GM12878 (cell line): ENCODE measurements at regions of chr10 and their contacts with region 1.

Region 1: DNA sequence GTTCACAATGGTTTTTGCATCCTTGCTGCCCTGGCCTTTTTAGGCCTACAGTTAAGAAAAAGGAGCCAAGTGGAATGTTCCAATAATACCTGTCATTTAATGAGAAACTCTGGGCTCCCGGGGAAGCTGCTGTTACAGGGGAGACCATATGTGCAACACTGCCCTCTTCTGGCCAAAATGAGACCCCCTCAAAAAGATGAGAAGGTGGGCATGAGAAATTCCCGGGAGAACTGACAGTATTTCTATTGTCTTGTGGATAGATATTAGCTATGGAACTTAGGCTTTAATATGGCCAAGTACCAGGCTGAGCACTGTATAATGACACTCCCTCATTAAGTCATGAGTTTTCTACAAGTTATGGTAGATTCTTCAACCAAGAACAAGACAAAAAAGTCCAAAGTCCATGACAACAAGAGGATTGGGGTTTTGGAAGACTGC is 99.4 kb downstream of the CCDC3 start:
- DNase-seq: peak; percentile 4
- ATAC-seq: peak; percentile 76
- H3K4me3 ChIP-seq: no peak overlapping the region
- H3K27ac ChIP-seq: no peak overlapping the region
- H3K4me1 ChIP-seq: no peaks in the 10 kb centered on the region
- H3K27me3 ChIP-seq: 0 out of 4 replicates have a peak, but pooled peaks cover 0 to 1% of the 10 kb centered on the region in 2 experiments
- CTCF ChIP-seq: peak; percentile 68 to 76 (median 72)
- EP300 ChIP-seq: no peak
- POLR2A ChIP-seq: no peak
- RAD21 ChIP-seq: peak; percentile 83

Region 2: DNA sequence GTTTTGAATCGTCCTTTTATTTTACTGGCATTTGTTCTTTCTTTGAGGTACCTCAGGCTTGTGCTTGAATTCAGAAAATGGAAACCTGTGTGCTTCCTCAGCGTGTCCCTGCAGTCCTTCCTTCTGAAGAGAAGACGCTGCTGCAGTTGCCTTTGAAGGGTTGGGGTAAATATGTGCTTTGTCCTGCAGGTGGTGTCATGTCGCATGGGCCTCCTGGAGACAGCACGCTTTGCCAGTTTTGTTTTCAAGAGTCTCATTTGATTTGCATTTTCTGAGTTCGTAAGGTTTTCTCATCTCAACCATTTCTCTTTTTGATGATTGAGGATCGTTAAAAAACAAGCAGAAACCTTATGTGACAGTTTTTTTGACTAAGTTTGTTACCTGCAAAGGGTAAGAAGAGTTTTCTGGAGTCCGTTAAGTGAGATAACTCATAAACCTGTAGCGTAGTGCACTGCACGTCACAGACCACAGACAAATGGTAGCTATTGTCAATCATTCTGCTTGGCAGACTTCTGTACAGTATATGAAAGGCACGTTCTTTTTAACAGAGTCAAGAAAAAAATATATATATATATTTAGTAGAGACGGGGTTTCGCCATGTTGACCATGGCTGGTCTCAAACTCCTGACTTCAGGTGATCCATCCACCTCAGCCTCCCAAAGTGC is 649.1 kb before region 1 on chr10:
- CTCF ChIA-PET with region 1: interaction called, 3 read pairs
- POLR2A ChIA-PET with region 1: no interaction called
- RAD21 ChIA-PET with region 1: no interaction called
- SMC1A ChIA-PET with region 1: no interaction called
- in situ Hi-C with region 1: no loop called
- intact Hi-C with region 1: loop called (anchors 2 kb)
- DNase-seq: no peak
- ATAC-seq: peak; percentile 96
- H3K4me3 ChIP-seq: no peak overlapping the region
- H3K27ac ChIP-seq: no peak overlapping the region
- H3K4me1 ChIP-seq: no peaks in the 10 kb centered on the region
- H3K27me3 ChIP-seq: no peaks in the 10 kb centered on the region
- CTCF ChIP-seq: peak; percentile 64 to 70 (median 69)
- EP300 ChIP-seq: no peak
- POLR2A ChIP-seq: no peak
- RAD21 ChIP-seq: peak; percentile 86

Region 3: DNA sequence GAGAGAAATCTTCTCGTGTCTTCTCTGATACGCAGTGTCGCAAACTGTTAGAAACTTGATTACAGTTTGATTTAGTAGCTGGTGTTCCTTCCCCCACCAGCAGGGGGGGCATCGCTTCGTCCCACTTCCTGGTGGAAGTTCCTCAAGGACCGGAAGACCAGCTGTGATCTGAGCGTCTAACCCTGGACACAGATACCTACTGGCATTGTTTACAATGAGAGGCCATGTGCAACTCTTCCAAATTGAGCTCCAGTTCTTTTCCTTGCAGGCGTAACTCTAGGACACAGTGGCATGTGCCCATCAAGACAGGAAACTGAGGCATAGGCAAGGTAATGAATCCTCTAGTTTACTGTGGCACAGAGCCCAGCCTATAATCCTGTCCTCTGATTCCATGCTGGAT is 119.6 kb before region 1 on chr10:
- CTCF ChIA-PET with region 1: interaction called, 12 read pairs
- POLR2A ChIA-PET with region 1: no interaction called
- RAD21 ChIA-PET with region 1: interaction called, 8 read pairs
- SMC1A ChIA-PET with region 1: interaction called, 5 read pairs
- in situ Hi-C with region 1: no loop called
- intact Hi-C with region 1: loop called (anchors 10 kb)
- DNase-seq: no peak
- ATAC-seq: peak; percentile 61
- H3K4me3 ChIP-seq: no peak overlapping the region
- H3K27ac ChIP-seq: no peak overlapping the region
- H3K4me1 ChIP-seq: no peaks in the 10 kb centered on the region
- H3K27me3 ChIP-seq: no peaks in the 10 kb centered on the region
- CTCF ChIP-seq: peak; percentile 43 to 76 (median 66)
- EP300 ChIP-seq: no peak
- POLR2A ChIP-seq: no peak
- RAD21 ChIP-seq: peak; percentile 39; the same call in 1 of the 2 replicates

Region 4: DNA sequence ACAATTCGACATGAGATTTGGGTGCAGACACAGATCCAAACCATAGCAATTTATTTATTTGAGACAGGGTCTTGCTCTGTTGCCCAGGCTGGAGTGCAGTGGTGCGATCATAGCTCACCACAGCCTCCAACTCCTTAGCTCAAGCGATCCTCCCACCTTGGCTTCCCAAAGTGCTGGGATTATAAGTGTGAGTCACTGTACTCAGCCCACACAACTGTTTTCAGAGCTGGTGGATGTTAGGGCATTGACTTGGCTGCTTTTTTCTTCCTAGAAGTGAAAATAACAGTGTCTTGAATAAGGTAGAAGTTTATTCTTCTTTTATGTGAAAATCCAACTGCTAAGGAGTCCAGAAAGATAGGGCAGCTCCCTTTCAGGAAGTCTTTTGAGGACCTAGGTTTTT is 32.7 kb before region 1 on chr10:
- CTCF ChIA-PET with region 1: no interaction called
- POLR2A ChIA-PET with region 1: no interaction called
- RAD21 ChIA-PET with region 1: no interaction called
- SMC1A ChIA-PET with region 1: no interaction called
- in situ Hi-C with region 1: no loop called
- intact Hi-C with region 1: no loop called
- DNase-seq: no peak
- ATAC-seq: no peak
- H3K4me3 ChIP-seq: no peak overlapping the region
- H3K27ac ChIP-seq: no peak overlapping the region
- H3K4me1 ChIP-seq: no peaks in the 10 kb centered on the region
- H3K27me3 ChIP-seq: no peaks in the 10 kb centered on the region
- CTCF ChIP-seq: no peak
- EP300 ChIP-seq: no peak
- POLR2A ChIP-seq: no peak
- RAD21 ChIP-seq: no peak

Region 5: GRCh38 chr10:12915637-12916168 is 13.5 kb after region 1 on chr10:
- CTCF ChIA-PET with region 1: interaction called, 10 read pairs
- POLR2A ChIA-PET with region 1: no interaction called
- RAD21 ChIA-PET with region 1: no interaction called
- SMC1A ChIA-PET with region 1: no interaction called
- in situ Hi-C with region 1: no loop called
- intact Hi-C with region 1: no loop called
- DNase-seq: no peak
- ATAC-seq: no peak
- H3K4me3 ChIP-seq: no peak overlapping the region
- H3K27ac ChIP-seq: no peak overlapping the region
- H3K4me1 ChIP-seq: no peaks in the 10 kb centered on the region
- H3K27me3 ChIP-seq: no peaks in the 10 kb centered on the region
- CTCF ChIP-seq: no peak
- EP300 ChIP-seq: no peak
- POLR2A ChIP-seq: no peak
- RAD21 ChIP-seq: no peak

Region 6: DNA sequence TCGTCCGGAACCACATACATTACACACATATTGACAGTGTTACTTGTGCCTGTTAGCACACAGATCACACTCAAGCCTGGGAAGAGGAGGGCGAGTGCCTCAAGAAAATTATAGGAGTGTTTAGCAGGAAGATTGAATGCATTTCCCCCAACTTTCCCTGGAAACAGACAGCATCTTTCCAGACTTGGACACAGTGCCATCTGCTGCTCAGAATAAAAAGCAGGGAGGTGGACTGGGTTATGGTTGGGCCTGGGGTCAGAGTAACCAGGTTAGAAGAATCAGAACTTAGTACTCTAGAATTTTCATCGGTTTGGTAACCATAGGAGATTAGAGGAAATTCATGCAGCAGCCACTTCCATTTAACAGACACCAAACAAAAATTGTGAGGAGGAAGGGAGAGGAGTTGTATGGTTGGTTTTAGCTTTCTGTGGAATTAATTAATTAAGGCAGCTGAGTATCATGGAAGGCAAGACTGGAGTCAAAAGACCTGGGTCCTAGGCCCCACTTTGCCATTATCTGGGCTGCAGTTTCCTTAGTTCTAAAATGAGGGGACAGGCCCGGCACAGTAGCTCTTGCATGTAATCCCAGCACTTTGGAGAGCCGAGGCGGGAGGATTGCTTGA is 154.4 kb after region 1 on chr10:
- CTCF ChIA-PET with region 1: no interaction called
- POLR2A ChIA-PET with region 1: no interaction called
- RAD21 ChIA-PET with region 1: no interaction called
- SMC1A ChIA-PET with region 1: no interaction called
- in situ Hi-C with region 1: no loop called
- intact Hi-C with region 1: no loop called
- DNase-seq: no peak
- ATAC-seq: no peak
- H3K4me3 ChIP-seq: no peak overlapping the region
- H3K27ac ChIP-seq: no peak overlapping the region
- H3K4me1 ChIP-seq: no peaks in the 10 kb centered on the region
- H3K27me3 ChIP-seq: no peaks in the 10 kb centered on the region; a peak in 1 of 4 replicates
- CTCF ChIP-seq: peak in 1 of 3 experiments; percentile 9; a peak in 1 of 6 replicates
- EP300 ChIP-seq: no peak
- POLR2A ChIP-seq: no peak
- RAD21 ChIP-seq: no peak

Region 7: GRCh38 chr10:13074561-13075451 is 172.7 kb after region 1 on chr10:
- CTCF ChIA-PET with region 1: interaction called, 3 read pairs
- POLR2A ChIA-PET with region 1: no interaction called
- RAD21 ChIA-PET with region 1: no interaction called
- SMC1A ChIA-PET with region 1: no interaction called
- in situ Hi-C with region 1: no loop called
- intact Hi-C with region 1: loop called (anchors 5 kb)
- DNase-seq: no peak
- ATAC-seq: peak; percentile 97
- H3K4me3 ChIP-seq: no peak overlapping the region
- H3K27ac ChIP-seq: no peak overlapping the region
- H3K4me1 ChIP-seq: no peaks in the 10 kb centered on the region
- H3K27me3 ChIP-seq: peaks cover 0 to 3% of the 10 kb centered on the region in 2 experiments; a peak in 2 of 4 replicates
- CTCF ChIP-seq: peak; percentile 69 to 81 (median 74)
- EP300 ChIP-seq: no peak
- POLR2A ChIP-seq: no peak
- RAD21 ChIP-seq: peak; percentile 89